ENCODE measurements at regions of chr9 and their contacts with region 1.

Region 1: DNA sequence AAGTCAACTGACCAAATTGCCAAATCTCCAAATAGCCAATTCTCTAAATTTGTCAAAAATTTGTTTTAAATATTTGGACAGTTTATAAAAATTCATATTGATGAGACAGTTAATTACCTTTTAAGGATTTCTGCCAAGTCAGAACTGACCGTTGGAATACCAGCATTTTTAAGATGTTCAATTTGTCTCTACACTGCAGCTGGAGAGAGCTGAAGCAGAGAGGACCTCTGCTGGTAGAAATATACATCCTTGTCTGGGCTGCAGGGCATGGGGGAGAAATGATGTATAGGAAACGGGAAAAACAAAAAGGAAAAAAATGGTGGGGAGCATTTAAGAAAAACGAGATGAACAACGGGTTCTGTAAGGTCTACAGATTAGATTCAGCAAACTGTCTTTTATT is 16.8 kb downstream of the NR6A1 start:
- DNase-seq: peak; percentile 55
- ATAC-seq: peak; percentile 63
- H3K4me3 ChIP-seq: no peak overlapping the region
- H3K27ac ChIP-seq: no peak overlapping the region
- H3K4me1 ChIP-seq: peaks cover 11% of the 10 kb centered on the region
- H3K27me3 ChIP-seq: peaks cover 28% of the 10 kb centered on the region
- CTCF ChIP-seq: peak; percentile 64
- POLR2A ChIP-seq: no peak
- RAD21 ChIP-seq: peak; percentile 64

Region 2: DNA sequence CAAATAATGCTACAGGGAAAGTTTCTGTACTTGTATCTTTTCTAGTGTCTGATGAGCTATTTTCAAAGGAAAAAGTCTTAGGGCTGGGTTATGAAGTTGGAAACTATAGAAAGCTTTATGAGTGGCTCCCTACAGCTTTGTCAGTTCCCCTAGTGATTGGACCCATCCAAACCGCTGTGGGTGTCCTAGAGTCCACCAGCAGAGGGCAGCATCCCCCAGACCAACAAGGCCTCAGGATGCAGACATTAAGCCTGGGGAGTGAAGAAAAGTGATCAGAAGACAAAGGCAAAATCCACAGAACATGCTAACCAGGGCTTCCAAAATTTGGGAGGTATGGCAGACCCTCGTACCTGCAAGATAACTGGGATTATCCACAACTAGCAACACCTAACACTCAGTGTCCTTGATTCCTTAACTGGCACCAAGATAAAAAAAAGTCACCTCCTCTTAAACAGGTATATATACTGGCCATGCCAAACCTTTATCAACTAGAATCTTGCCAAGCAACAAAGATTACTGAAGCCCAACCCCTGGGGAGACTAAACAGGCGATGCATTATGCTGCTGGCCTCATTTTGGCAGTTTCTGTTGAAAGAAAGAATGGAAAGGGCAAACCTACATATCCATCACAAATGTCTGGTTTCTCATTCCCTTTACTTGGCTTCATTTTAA is 136.7 kb before region 1 on chr9:
- CTCF ChIA-PET with region 1: interaction called, 8 read pairs
- POLR2A ChIA-PET with region 1: no interaction called
- dilution Hi-C with region 1: no loop called
- in situ Hi-C with region 1: no loop called
- intact Hi-C with region 1: loop called (anchors 1 kb)
- DNase-seq: peak; percentile 79
- ATAC-seq: peak; percentile 98
- H3K4me3 ChIP-seq: no peak overlapping the region
- H3K27ac ChIP-seq: no peak overlapping the region
- H3K4me1 ChIP-seq: peaks cover 2% of the 10 kb centered on the region
- H3K27me3 ChIP-seq: peaks cover 7% of the 10 kb centered on the region
- CTCF ChIP-seq: peak; percentile 97
- POLR2A ChIP-seq: peak; percentile 44; the same call in 1 of the 2 replicates
- RAD21 ChIP-seq: peak; percentile 98

Region 3: GRCh38 chr9:124735121-124735520 is 19.2 kb before region 1 on chr9:
- CTCF ChIA-PET with region 1: no interaction called
- POLR2A ChIA-PET with region 1: no interaction called
- dilution Hi-C with region 1: no loop called
- in situ Hi-C with region 1: no loop called
- intact Hi-C with region 1: no loop called
- DNase-seq: peak; percentile 53
- ATAC-seq: peak; percentile 91
- H3K4me3 ChIP-seq: no peak overlapping the region
- H3K27ac ChIP-seq: no peak overlapping the region
- H3K4me1 ChIP-seq: peaks cover 7% of the 10 kb centered on the region
- H3K27me3 ChIP-seq: no peaks in the 10 kb centered on the region
- CTCF ChIP-seq: no peak
- POLR2A ChIP-seq: no peak
- RAD21 ChIP-seq: no peak

Region 4: GRCh38 chr9:125066839-125067619 is 312.7 kb after region 1 on chr9:
- CTCF ChIA-PET with region 1: no interaction called
- POLR2A ChIA-PET with region 1: no interaction called
- dilution Hi-C with region 1: no loop called
- in situ Hi-C with region 1: no loop called
- intact Hi-C with region 1: no loop called
- DNase-seq: peak; percentile 47
- ATAC-seq: peak; percentile 64
- H3K4me3 ChIP-seq: no peak overlapping the region
- H3K27ac ChIP-seq: peak overlapping the region; percentile 32; the same call in 1 of the 2 replicates
- H3K4me1 ChIP-seq: peaks cover 4% of the 10 kb centered on the region
- H3K27me3 ChIP-seq: no peaks in the 10 kb centered on the region
- CTCF ChIP-seq: no peak
- POLR2A ChIP-seq: no peak
- RAD21 ChIP-seq: no peak

Measured in IMR-90 (cell line).